Heart right ventricle (tissue), 16 donors: ENCODE measurements at regions of chr13 and their contacts with region 1.

Region 1: DNA sequence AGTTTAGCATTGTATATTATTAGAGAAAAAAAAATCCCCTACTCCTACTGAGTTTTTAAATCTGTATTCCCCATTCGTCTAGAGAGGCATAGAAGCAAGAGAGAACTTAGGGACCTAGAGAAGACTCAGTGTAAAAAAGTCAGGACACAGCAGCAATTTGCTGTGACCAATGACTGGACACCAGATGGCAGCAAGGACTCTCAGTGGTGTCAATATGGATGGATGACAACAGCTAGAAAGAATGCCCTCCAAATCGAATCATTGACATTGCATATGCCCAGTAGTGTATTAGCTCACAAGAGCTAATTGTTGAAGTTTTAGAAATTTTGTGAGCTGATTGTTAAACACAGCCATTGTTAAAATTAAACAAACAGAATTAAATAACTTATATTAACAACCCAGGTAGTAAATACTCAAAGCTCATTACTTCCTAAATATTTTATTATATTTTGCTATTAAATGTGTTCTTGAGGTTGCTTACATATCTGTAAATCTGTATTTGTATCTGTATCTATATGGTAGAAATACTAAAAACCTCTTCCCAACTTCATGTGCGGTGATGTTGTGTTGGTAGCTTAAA is 43.9 kb downstream of the SIAH3 start:
- DNase-seq: peak in 1 of 2 donors; percentile 29
- ATAC-seq: peak in 4 of 8 donors; percentile 54 to 84 (median 74)
- H3K4me3 ChIP-seq: no peak overlapping the region
- H3K27ac ChIP-seq: no peak overlapping the region
- H3K4me1 ChIP-seq: no peaks in the 10 kb centered on the region
- H3K27me3 ChIP-seq: no peaks in the 10 kb centered on the region
- CTCF ChIP-seq: peak; percentile 11 to 72 (median 60)

Region 2: GRCh38 chr13:45879670-45880069 is 72.1 kb after region 1 on chr13:
- intact Hi-C with region 1: loop called in 3 of 10 experiments (anchors 1 to 5 kb)
- DNase-seq: peak; percentile 47 to 50
- ATAC-seq: peak in 7 of 8 donors; percentile 73 to 98 (median 90)
- H3K4me3 ChIP-seq: no peak overlapping the region
- H3K27ac ChIP-seq: no peak overlapping the region
- H3K4me1 ChIP-seq: peaks cover 0 to 6% (median 0%) of the 10 kb centered on the region in 9 donors
- H3K27me3 ChIP-seq: peaks cover 0 to 5% (median 0%) of the 10 kb centered on the region in 7 donors
- CTCF ChIP-seq: peak in 8 of 9 donors; percentile 10 to 57 (median 44)

Region 3: DNA sequence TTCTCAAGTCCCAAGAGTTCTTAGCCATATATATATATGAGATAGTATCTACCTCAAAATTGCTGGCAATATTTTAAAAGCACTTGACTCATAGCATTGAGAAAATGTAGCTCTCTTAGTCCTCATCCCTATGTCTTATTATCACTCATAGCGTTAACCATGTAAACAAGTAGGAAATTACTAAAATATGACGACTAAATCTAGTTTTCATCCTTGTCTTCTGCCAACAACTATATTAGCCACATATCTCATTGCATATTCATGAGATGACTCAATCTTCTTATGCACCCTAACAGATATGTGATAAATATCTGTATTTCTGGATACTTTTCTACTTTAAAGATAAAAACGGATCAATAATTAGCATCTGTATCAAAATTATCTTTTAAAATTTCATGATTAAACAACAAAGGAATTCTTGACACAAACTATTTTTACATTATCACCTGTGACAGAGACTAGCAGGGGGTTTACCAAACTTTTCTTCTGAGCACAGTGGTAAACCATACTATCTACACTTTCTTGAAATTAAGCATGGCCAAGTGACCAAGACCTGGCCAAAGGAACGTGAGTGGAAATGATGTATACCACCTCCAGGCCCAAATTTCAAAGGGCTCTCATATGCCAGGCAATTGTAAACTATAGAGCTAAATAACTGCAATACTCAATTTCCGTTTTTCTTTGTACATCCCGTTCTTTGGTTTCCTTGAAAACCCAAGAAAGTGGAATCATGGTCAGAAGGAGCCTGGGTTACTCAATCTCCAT is 199.3 kb after region 1 on chr13:
- intact Hi-C with region 1: loop called in 1 of 10 experiments (anchors 5 kb)
- DNase-seq: no peak
- ATAC-seq: no peak
- H3K4me3 ChIP-seq: no peak overlapping the region
- H3K27ac ChIP-seq: no peak overlapping the region
- H3K4me1 ChIP-seq: no peaks in the 10 kb centered on the region
- H3K27me3 ChIP-seq: no peaks in the 10 kb centered on the region
- CTCF ChIP-seq: no peak